ENCODE measurements at regions of chr11 and their contacts with region 1.

Region 1: DNA sequence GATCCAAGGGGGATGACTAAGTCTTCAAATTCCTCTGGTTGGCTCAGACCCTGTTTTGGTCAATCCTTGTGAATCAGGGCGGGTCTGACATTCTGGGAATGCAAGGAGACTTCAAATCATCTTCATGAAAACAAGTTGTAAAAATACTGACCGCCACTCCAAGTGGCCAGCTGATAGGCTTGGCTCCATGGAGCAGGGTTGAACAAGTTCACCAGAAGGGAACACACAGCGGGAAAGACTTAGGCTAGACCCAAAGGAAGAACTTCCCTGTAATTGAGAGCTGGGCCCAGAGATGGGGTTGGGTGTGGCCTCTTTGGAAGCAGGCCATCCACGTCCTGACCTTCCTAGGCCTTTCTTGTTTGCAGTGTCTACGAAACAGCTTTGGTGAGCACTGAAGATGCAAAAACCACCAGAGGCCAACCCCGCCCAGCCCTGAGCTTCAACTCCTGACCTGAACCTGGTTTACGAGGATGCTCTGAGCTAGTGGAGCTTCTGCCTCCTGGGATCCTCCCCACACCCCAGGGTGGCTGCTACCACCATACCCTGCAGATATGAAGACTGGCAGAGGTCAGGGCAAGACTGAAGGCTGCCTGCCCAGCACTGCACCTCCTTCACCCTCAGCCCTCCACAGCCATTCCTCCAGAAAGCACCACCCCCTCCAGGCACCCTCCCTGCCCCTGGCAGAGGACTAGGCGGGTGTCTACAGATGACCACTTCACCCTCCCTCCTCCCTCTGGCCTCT is 26.1 kb downstream of the GDPD5 start:
- DNase-seq: peak; percentile 71 to 89
- H3K4me3 ChIP-seq: no peak overlapping the region
- H3K27ac ChIP-seq: 0 out of 2 replicates have a peak overlapping the region, but pooled peaks have one; percentile 9
- H3K4me1 ChIP-seq: peaks cover 36% of the 10 kb centered on the region
- H3K27me3 ChIP-seq: no peaks in the 10 kb centered on the region
- CTCF ChIP-seq: no peak

Region 2: GRCh38 chr11:75465701-75466531 is 33.7 kb before region 1 on chr11:
- CTCF ChIA-PET with region 1: interaction called, 3 read pairs
- POLR2A ChIA-PET with region 1: no interaction called
- intact Hi-C with region 1: loop called (anchors 1 kb)
- DNase-seq: peak in 1 of 2 experiments; percentile 61
- H3K4me3 ChIP-seq: no peak overlapping the region
- H3K27ac ChIP-seq: no peak overlapping the region
- H3K4me1 ChIP-seq: peaks cover 14% of the 10 kb centered on the region
- H3K27me3 ChIP-seq: no peaks in the 10 kb centered on the region
- CTCF ChIP-seq: no peak

Region 3: DNA sequence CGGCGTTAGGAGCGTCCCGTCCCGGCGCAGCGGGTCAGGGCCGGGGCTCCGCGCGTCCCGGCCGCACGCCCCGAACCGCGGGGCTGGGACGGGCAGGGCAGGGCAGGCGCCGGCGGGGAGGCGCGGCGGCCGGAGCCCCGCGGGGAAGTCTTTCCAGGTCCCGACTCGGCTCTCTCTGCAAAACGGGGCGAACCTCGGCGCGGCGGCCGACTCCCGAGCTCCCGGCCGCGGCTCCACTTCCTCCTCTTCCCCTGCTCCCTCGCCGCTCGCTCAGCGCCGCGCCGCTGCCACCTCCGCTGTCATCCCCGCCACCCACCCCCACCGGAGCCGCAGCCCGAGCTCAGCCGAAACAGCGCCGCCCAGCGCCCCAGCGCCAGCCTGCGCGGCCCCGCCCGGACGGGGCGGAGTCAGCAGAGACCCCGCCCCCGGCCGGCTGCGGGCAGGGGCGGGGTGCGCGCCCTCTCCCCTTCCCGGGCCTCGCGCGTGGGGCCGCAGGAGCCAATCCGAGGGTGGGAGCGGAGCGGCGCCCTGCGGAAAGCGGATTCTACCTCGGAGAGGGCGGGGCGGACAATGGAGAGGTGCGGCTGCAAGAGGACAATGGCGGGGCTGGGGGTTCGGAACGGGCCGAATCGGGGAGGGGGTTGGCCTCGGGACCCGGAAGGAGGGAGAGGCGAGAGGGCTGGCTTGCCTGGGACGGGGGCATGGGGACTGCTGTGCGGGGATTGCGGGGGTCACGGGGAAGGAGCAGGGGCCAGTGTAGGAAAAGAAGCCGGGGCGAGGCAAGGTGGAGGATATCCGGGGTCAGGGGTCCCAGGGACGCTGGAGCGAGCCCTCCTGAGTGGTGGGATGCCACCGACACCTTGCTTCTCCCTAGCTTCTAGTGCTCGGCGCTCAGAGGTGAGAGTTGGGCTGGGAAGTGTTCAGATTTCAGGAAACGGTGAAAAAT is 26.2 kb after region 1 on chr11 and contains the start of gene GDPD5:
- CTCF ChIA-PET with region 1: interaction called, 4 read pairs
- POLR2A ChIA-PET with region 1: interaction called, 5 read pairs
- intact Hi-C with region 1: loop called (anchors 2 kb)
- DNase-seq: peak; percentile 63 to 91
- H3K4me3 ChIP-seq: peak within 1 kb of the TSS; percentile 58
- H3K27ac ChIP-seq: no peak within 1 kb of the TSS
- H3K4me1 ChIP-seq: peaks cover 12% of the 10 kb centered on the region; the same call in 1 of the 2 replicates
- H3K27me3 ChIP-seq: peaks cover 15% of the 10 kb centered on the region; the same call in 1 of the 2 replicates
- CTCF ChIP-seq: 0 out of 2 replicates have a peak, but pooled peaks have one; percentile 36
- total RNA-seq, gene GDPD5: 7.9 and 9.9 TPM in 2 replicates

Region 4: DNA sequence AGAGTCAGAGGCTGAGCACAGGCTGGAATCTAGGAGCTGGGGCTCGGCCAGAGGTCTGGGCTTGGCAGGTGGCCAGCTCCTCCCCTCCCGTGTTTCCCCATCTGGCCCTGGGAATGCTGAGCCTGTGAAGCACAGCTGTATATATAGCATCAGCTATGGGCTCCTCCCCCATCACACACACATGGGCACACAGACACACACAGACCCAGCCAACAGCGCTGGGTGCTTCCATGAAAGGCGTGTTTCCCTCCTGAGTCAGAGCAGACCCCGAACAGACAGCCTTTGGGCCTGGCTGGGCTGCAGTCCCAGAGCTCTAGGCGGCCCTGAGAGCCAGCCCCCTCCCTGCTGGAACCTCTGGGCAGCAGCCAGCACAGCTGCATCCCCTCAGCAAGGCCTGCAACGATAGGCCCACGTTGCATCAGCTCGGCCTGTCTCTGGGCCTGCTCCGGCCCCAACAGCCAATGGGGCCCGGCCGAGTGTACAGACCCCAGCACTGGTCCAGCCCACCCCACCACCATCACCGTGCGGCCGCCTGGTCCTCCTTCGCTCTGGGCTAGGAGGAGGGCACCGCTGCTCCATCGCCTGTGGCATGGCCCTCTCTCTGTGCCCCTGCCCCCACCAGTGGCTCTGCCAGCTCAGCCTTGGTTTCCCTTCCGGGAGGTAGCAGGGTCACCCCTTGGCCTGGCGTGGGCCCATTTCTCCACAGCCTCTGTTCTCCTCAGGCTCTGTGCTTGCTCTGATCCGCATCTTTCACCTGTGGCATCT is 54.8 kb after region 1 on chr11:
- CTCF ChIA-PET with region 1: no interaction called
- POLR2A ChIA-PET with region 1: no interaction called
- intact Hi-C with region 1: no loop called
- DNase-seq: no peak
- H3K4me3 ChIP-seq: no peak overlapping the region
- H3K27ac ChIP-seq: no peak overlapping the region
- H3K4me1 ChIP-seq: peaks cover 10% of the 10 kb centered on the region
- H3K27me3 ChIP-seq: no peaks in the 10 kb centered on the region
- CTCF ChIP-seq: no peak